ENCODE measurements at regions of chr4 and their contacts with region 1.

Region 1: DNA sequence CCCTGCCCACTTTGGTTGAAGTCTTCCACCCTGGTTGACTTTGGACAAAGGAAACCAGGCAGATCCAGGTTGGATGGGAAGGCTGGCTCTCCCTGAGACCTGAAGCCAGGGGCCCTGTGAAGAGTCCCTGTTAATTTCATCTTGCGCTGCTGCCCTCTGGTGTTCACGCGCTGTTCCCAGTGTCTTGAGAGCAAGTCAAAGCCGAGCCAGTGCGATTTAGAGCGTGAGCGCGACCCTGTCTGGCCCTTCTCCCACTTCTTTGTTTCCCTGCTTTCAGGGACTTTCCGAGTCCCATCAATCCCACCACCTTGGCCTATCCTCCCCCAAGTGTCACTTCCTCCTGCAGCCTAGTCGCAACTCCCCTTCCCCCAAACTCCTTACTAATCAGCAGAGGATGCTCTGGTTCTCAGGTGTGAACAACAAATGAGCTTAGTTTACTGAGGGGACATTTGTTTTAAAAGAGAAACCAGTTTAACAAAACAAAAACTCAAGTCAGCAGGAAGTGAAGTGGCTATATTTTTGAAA is 25.8 kb upstream of the CHRNA9 start:
- DNase-seq: peak; percentile 96
- ATAC-seq: peak; percentile 70
- H3K4me3 Mint-ChIP-seq: peak overlapping the region; percentile 71
- H3K27ac Mint-ChIP-seq: peak overlapping the region; percentile 95
- H3K4me1 Mint-ChIP-seq: peaks cover 86% of the 10 kb centered on the region
- H3K27me3 Mint-ChIP-seq: no peaks in the 10 kb centered on the region

Region 2: GRCh38 chr4:39458505-39459300 is 850.6 kb before region 1 on chr4 and contains the starts of genes LIAS and RPL9:
- CTCF ChIA-PET with region 1: no interaction called
- POLR2A ChIA-PET with region 1: no interaction called
- intact Hi-C with region 1: loop called in 1 of 2 experiments (anchors 5 kb)
- DNase-seq: peak; percentile 96
- ATAC-seq: peak; percentile 88
- H3K4me3 Mint-ChIP-seq: peak within 1 kb of the TSS; percentile 98
- H3K27ac Mint-ChIP-seq: peak within 1 kb of the TSS; percentile 100
- H3K4me1 Mint-ChIP-seq: peaks cover 44% of the 10 kb centered on the region
- H3K27me3 Mint-ChIP-seq: no peaks in the 10 kb centered on the region
- total RNA-seq, gene LIAS: 30.7 to 35.5 TPM
- total RNA-seq, gene RPL9: 1,442 to 2,369 TPM

Region 3: GRCh38 chr4:40149960-40150385 is 159.3 kb before region 1 on chr4:
- CTCF ChIA-PET with region 1: interaction called, 13 read pairs
- POLR2A ChIA-PET with region 1: interaction called, 3 read pairs
- intact Hi-C with region 1: loop called (anchors 1 kb)
- DNase-seq: peak; percentile 80
- ATAC-seq: peak; percentile 96
- H3K4me3 Mint-ChIP-seq: no peak overlapping the region
- H3K27ac Mint-ChIP-seq: peak overlapping the region; percentile 61
- H3K4me1 Mint-ChIP-seq: peaks cover 33% of the 10 kb centered on the region
- H3K27me3 Mint-ChIP-seq: no peaks in the 10 kb centered on the region

Region 4: GRCh38 chr4:40212674-40213527 is 96.4 kb before region 1 on chr4:
- CTCF ChIA-PET with region 1: interaction called, 11 read pairs
- POLR2A ChIA-PET with region 1: interaction called, 3 read pairs
- intact Hi-C with region 1: no loop called
- DNase-seq: peak; percentile 9
- ATAC-seq: peak; percentile 35
- H3K4me3 Mint-ChIP-seq: peak overlapping the region; percentile 75
- H3K27ac Mint-ChIP-seq: peak overlapping the region; percentile 93
- H3K4me1 Mint-ChIP-seq: peaks cover 92% of the 10 kb centered on the region
- H3K27me3 Mint-ChIP-seq: no peaks in the 10 kb centered on the region

Region 5: GRCh38 chr4:40255393-40256281 is 53.7 kb before region 1 on chr4:
- CTCF ChIA-PET with region 1: interaction called, 8 read pairs
- POLR2A ChIA-PET with region 1: no interaction called
- intact Hi-C with region 1: loop called (anchors 1 to 2 kb)
- DNase-seq: no peak
- ATAC-seq: peak; percentile 31
- H3K4me3 Mint-ChIP-seq: no peak overlapping the region
- H3K27ac Mint-ChIP-seq: peak overlapping the region; percentile 44
- H3K4me1 Mint-ChIP-seq: peaks cover 76% of the 10 kb centered on the region
- H3K27me3 Mint-ChIP-seq: no peaks in the 10 kb centered on the region

Region 6: GRCh38 chr4:40325189-40326019 is 16.1 kb after region 1 on chr4:
- CTCF ChIA-PET with region 1: interaction called, 19 read pairs
- POLR2A ChIA-PET with region 1: no interaction called
- intact Hi-C with region 1: loop called in 1 of 2 experiments (anchors 1 kb)
- DNase-seq: peak; percentile 78
- ATAC-seq: peak; percentile 98
- H3K4me3 Mint-ChIP-seq: no peak overlapping the region
- H3K27ac Mint-ChIP-seq: no peak overlapping the region
- H3K4me1 Mint-ChIP-seq: peaks cover 27% of the 10 kb centered on the region
- H3K27me3 Mint-ChIP-seq: peaks cover 2% of the 10 kb centered on the region

Region 7: DNA sequence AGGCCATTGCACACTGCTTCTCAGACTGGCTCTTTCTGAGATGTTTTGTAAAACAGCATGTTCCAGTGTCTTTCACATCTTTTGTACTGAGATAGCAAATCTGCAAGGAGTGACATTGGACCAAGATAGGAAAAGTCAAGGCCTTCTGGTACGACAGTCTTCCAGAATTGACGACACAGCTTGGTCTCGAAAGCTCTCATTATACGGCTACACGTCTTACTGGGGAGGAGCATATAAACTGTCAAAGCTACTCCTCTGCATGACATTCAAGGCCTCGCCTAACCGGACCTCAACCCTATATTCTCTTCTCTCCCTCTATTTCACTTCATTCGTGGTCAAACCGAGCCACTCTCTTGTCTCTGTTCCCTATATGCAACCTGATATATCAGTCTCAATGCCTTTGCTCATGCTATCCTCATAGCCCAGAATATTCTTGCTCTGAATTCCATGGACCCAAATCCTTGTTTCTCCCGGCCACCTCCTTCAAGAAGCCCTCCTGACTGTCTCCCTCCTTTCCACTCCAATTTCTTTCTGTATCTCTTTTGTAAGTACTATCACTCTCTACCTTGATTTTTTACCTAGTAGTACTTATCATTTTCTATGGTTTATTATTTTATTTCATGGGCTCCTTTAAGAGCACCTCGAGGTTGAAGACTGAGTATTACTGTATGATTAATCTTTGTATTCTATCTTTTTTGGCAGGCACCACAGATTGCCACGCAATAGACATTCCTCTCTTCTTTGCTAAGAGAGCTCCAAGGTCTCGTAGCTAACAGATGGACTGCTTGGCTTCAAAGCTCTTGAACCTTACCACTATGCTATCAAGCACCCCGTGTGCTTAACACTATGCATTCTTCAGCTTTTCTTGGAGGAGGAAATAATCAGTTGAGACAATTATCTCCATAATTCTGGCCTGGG is 285.2 kb after region 1 on chr4:
- CTCF ChIA-PET with region 1: no interaction called
- POLR2A ChIA-PET with region 1: no interaction called
- intact Hi-C with region 1: no loop called
- DNase-seq: no peak
- ATAC-seq: no peak
- H3K4me3 Mint-ChIP-seq: no peak overlapping the region
- H3K27ac Mint-ChIP-seq: no peak overlapping the region
- H3K4me1 Mint-ChIP-seq: no peaks in the 10 kb centered on the region
- H3K27me3 Mint-ChIP-seq: no peaks in the 10 kb centered on the region

Region 8: DNA sequence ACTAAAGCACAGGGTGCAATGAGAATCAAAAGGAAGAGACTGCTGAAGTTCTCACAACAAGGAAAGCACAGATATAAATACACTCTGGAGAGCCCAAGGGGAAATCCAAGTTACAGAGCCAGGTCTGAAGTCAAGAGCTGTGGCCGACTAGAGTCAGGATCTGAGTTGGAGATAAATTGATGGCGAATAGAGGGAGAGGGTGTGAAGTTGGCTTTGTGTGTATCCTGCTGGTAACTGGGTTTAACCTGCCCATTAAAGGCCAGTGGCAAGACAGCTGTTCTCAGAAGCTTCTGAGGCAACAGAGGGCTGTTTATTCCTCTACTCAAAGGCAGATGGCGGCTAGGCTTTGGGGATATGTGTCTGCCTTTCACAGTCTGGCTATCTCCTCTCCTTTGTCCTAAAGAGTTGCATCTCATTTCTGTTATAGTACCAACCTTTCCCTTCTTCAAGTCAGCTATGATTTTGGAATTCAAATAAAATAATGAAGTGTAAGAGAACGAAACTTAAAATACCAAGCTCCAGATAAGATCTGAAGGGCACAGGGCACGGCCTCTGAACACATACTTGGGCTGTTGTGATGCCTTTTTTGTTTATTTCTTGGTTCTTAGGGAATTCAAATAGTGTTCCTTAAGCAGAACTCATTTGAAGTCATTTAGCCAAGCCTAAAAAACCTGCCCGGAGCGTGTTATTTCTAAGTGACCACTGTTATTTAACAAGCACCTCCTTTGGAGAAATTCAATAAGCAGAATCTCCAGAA is 762.9 kb after region 1 on chr4:
- CTCF ChIA-PET with region 1: no interaction called
- POLR2A ChIA-PET with region 1: no interaction called
- intact Hi-C with region 1: no loop called
- DNase-seq: no peak
- ATAC-seq: no peak
- H3K4me3 Mint-ChIP-seq: no peak overlapping the region
- H3K27ac Mint-ChIP-seq: no peak overlapping the region
- H3K4me1 Mint-ChIP-seq: no peaks in the 10 kb centered on the region
- H3K27me3 Mint-ChIP-seq: peaks cover under 1% of the 10 kb centered on the region